Breast epithelium (tissue), 4 donors: ENCODE measurements at regions of chr9 and their contacts with region 1.

Region 1: DNA sequence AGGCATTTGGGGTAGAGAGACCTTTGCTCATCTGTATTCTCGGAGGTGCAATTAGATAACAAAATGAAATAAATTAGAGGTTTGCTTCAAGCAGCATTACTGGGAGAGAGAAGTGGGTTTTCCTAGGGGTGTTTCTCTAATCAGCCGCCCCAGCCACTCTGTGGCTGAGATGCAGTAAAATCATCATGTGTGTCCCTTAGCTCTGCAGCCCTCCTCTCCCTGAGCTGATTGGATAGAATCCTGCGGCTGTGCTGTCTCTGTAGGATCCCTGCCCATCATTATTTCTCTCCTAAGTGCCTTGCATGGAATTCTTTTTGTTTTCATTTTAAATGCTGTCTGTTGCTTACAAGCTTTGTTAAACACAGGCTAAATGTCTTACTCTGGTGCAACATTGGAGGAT is 171.4 kb downstream of the SH3GL2 start:
- DNase-seq: no peak
- H3K4me3 ChIP-seq: no peak overlapping the region
- H3K27ac ChIP-seq: no peak overlapping the region
- H3K4me1 ChIP-seq: no peaks in the 10 kb centered on the region
- H3K27me3 ChIP-seq: no peaks in the 10 kb centered on the region
- CTCF ChIP-seq: no peak
- POLR2A ChIP-seq: no peak

Region 2: GRCh38 chr9:17660158-17660557 is 90.1 kb before region 1 on chr9:
- intact Hi-C with region 1: loop called (anchors 2 kb)
- DNase-seq: no peak
- H3K4me3 ChIP-seq: no peak overlapping the region
- H3K27ac ChIP-seq: no peak overlapping the region
- H3K4me1 ChIP-seq: no peaks in the 10 kb centered on the region
- H3K27me3 ChIP-seq: no peaks in the 10 kb centered on the region
- CTCF ChIP-seq: no peak
- POLR2A ChIP-seq: no peak

Region 3: GRCh38 chr9:17942230-17942897 is 192.1 kb after region 1 on chr9:
- intact Hi-C with region 1: no loop called
- DNase-seq: no peak
- H3K4me3 ChIP-seq: no peak overlapping the region
- H3K27ac ChIP-seq: no peak overlapping the region
- H3K4me1 ChIP-seq: no peaks in the 10 kb centered on the region
- H3K27me3 ChIP-seq: no peaks in the 10 kb centered on the region
- CTCF ChIP-seq: no peak
- POLR2A ChIP-seq: no peak